ENCODE measurements at regions of chr7 and their contacts with region 1.

Region 1: GRCh38 chr7:87213811-87214210 is 5.7 kb downstream of the TMEM243 start:
- DNase-seq: no peak
- H3K4me3 Mint-ChIP-seq: peak overlapping the region; percentile 71
- H3K27ac Mint-ChIP-seq: peak overlapping the region; percentile 87
- H3K4me1 Mint-ChIP-seq: peaks cover 88% of the 10 kb centered on the region
- H3K27me3 Mint-ChIP-seq: no peaks in the 10 kb centered on the region

Region 2: DNA sequence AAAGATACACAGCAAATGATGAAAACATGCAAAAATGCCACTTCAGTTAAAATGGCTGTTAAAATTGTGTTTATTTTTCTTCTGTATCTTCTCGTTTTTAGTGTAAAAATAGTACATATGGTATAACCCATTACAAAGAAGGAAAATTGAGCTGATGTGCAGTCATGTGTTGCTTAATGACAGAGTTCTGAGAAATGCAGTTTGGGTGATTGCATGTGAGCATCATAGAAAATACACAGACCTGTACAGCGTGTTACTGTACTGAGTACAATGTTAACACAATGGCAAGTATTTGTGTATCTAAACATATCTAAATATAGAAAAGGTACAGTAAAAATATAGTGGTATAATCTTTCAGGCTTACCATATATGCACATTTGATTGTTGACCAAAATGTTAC is 54.3 kb before region 1 on chr7:
- intact Hi-C with region 1: no loop called
- DNase-seq: no peak
- H3K4me3 Mint-ChIP-seq: no peak overlapping the region
- H3K27ac Mint-ChIP-seq: no peak overlapping the region
- H3K4me1 Mint-ChIP-seq: peaks cover 44% of the 10 kb centered on the region
- H3K27me3 Mint-ChIP-seq: no peaks in the 10 kb centered on the region

Region 3: DNA sequence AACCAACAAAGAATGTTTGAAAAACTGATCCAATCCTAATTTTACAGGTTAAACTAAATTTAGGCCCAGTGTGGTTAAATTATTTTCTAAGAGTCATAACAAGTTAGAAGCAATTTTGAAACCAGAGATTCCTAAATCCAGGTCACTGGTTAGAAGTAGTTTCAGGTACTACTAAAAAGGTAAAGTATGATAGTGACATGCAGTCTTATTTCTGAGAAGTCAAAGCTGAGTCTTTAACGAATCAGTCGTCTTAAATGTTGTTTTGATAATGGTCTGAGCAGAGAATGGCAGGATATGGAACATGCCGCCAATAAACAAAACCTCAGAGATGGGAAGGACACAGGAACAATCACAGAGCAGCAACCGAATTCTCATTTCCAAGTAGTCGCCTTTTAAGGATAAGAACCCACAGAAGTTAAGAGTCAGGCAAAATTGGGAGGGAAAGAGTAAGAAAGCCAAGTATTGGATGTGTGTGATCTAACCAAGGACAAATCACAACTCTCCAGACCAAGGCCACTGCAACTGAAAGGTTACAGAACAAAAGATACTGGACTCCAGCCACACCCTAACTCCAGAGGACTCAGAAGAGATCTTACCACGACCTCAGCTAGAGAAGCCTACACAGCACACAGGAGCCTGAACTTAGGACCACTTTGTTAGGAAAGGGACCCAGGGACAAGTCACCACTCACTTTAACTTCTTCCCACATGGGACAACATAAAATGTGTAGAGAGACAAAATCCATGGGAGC is 13.9 kb before region 1 on chr7:
- intact Hi-C with region 1: loop called (anchors 2 kb)
- DNase-seq: no peak
- H3K4me3 Mint-ChIP-seq: no peak overlapping the region
- H3K27ac Mint-ChIP-seq: peak overlapping the region; percentile 18
- H3K4me1 Mint-ChIP-seq: peaks cover 49% of the 10 kb centered on the region
- H3K27me3 Mint-ChIP-seq: no peaks in the 10 kb centered on the region